HepG2 (cell line): ENCODE measurements at regions of chr10 and their contacts with region 1.

Region 1: DNA sequence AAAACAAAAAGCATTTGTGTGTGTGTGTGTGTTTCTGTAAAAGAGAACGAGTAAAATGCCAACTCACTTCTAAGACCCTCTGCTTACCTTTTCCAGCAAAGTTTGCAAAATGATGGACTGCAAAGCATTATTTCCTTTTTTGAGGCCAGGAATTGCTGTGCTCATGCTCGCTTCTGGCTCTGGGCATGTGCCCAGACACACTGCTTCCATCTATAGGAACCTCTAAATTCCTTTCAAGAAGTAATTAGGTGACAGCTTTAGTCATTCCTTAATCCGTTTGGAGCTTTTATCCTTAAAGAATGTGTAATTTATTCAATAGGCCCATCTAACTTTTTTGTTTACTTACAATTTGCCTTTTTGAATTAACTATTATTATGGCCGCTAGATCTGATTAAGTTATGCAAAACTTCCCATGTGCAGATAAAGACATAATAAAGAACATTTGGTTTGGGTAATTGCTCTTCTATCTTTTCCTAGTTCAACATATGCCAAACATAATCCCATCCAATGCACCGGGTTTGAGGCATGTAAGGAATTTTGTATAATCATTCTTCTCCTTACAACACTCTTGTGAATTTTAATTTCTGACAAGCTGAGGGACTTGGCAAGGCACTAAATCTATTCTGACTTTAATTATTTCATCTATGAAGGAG is 34.7 kb downstream of the A1CF start:
- DNase-seq: no peak
- ATAC-seq: no peak
- H3K4me3 ChIP-seq: no peak overlapping the region
- H3K27ac ChIP-seq: no peak overlapping the region
- H3K4me1 ChIP-seq: no peaks in the 10 kb centered on the region
- H3K27me3 ChIP-seq: no peaks in the 10 kb centered on the region
- CTCF ChIP-seq: no peak
- EP300 ChIP-seq: no peak
- POLR2A ChIP-seq: no peak
- RAD21 ChIP-seq: no peak

Region 2: GRCh38 chr10:50807851-50808776 is 42.6 kb before region 1 on chr10:
- CTCF ChIA-PET with region 1: no interaction called
- POLR2A ChIA-PET with region 1: no interaction called
- in situ Hi-C with region 1: no loop called
- intact Hi-C with region 1: loop called (anchors 5 kb)
- DNase-seq: peak; percentile 88
- ATAC-seq: peak; percentile 100
- H3K4me3 ChIP-seq: no peak overlapping the region
- H3K27ac ChIP-seq: peak overlapping the region; percentile 71
- H3K4me1 ChIP-seq: peaks cover 24% of the 10 kb centered on the region
- H3K27me3 ChIP-seq: no peaks in the 10 kb centered on the region
- CTCF ChIP-seq: no peak
- EP300 ChIP-seq: peak; percentile 56 to 64; a peak in 3 of 4 replicates
- POLR2A ChIP-seq: no peak
- RAD21 ChIP-seq: no peak